CD4-positive, alpha-beta memory T cell (primary cell): ENCODE measurements at regions of chr12 and their contacts with region 1.

Region 1: GRCh38 chr12:118135788-118136558 is at the start of gene PEBP1:
- DNase-seq: peak; percentile 88 to 91 (median 90)
- H3K4me3 ChIP-seq: peak within 1 kb of the TSS; percentile 61 to 86
- H3K4me3 Mint-ChIP-seq: peak within 1 kb of the TSS; percentile 95 to 99 (median 96)
- H3K27ac ChIP-seq: peak within 1 kb of the TSS; percentile 67
- H3K27ac Mint-ChIP-seq: peak within 1 kb of the TSS; percentile 88 to 98 (median 94)
- H3K4me1 ChIP-seq: peaks cover 29% of the 10 kb centered on the region
- H3K4me1 Mint-ChIP-seq: peaks cover 19 to 54% (median 26%) of the 10 kb centered on the region in 4 donors
- H3K27me3 ChIP-seq: no peaks in the 10 kb centered on the region
- H3K27me3 Mint-ChIP-seq: no peaks in the 10 kb centered on the region
- total RNA-seq, gene PEBP1: 95.9 to 99.1 TPM

Region 2: GRCh38 chr12:118016424-118017264 is 119.3 kb before region 1 on chr12 and contains the start of gene RFC5:
- CTCF ChIA-PET with region 1: no interaction called
- POLR2A ChIA-PET with region 1: interaction called, 3 read pairs
- intact Hi-C with region 1: loop called (anchors 1 kb)
- DNase-seq: peak; percentile 95 to 96 (median 96)
- H3K4me3 ChIP-seq: peak within 1 kb of the TSS; percentile 9 to 92
- H3K4me3 Mint-ChIP-seq: peak within 1 kb of the TSS; percentile 90 to 97 (median 91)
- H3K27ac ChIP-seq: peak within 1 kb of the TSS; percentile 66
- H3K27ac Mint-ChIP-seq: peak within 1 kb of the TSS; percentile 87 to 98 (median 90)
- H3K4me1 ChIP-seq: peaks cover 15% of the 10 kb centered on the region
- H3K4me1 Mint-ChIP-seq: peaks cover 12 to 23% (median 17%) of the 10 kb centered on the region in 4 donors
- H3K27me3 ChIP-seq: no peaks in the 10 kb centered on the region
- H3K27me3 Mint-ChIP-seq: peaks cover 0 to 1% of the 10 kb centered on the region in 2 donors
- total RNA-seq, gene RFC5: 17.2 TPM

Region 3: GRCh38 chr12:118061011-118061875 is 74.7 kb before region 1 on chr12 and contains the start of gene WSB2:
- CTCF ChIA-PET with region 1: no interaction called
- POLR2A ChIA-PET with region 1: interaction called, 14 read pairs
- intact Hi-C with region 1: loop called (anchors 5 kb)
- DNase-seq: peak; percentile 34 to 57 (median 42)
- H3K4me3 ChIP-seq: peak within 1 kb of the TSS; percentile 84 to 96
- H3K4me3 Mint-ChIP-seq: peak within 1 kb of the TSS; percentile 92 to 98 (median 96)
- H3K27ac ChIP-seq: peak within 1 kb of the TSS; percentile 81
- H3K27ac Mint-ChIP-seq: peak within 1 kb of the TSS; percentile 92 to 97 (median 96)
- H3K4me1 ChIP-seq: peaks cover 53% of the 10 kb centered on the region
- H3K4me1 Mint-ChIP-seq: peaks cover 26 to 66% (median 46%) of the 10 kb centered on the region in 4 donors
- H3K27me3 ChIP-seq: no peaks in the 10 kb centered on the region
- H3K27me3 Mint-ChIP-seq: no peaks in the 10 kb centered on the region
- total RNA-seq, gene WSB2: 24.4 to 31.5 TPM

Region 4: DNA sequence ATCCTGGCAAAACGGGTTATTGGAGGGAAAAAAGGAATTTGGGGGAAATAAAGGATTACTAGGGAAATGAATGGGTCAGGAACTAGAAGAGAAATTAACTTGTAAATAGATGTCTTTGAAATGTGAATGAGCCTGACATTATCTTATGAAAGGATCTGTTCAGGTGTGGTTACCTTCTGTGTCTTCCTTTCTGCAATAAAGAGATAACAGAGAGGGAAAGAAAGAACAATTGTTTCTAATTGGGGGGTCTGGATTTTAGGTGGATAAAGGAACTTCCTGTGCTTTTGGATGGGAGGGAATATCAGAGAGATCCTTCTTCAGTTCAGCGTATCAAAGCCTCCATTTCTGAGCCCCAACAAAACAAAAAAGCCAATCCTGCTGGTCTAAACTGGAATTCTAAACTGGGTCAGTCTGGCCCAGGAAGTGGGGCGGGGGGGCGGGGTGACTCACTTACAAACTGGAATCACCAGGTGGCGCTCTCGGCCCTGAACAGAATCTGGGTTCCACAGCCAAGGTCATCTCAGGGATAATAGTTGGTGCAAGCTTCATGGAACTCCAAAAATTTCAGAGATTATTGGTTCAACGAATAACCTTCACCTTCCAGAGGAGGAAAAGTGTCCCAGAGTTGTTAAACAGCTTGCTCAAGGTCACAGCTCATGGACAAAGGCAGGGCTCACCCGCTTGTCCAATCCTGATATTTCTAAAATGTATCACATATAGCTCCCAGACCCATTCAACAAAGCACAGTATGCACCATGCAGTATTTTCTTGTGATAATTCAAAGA is 15.2 kb before region 1 on chr12:
- CTCF ChIA-PET with region 1: interaction called, 59 read pairs
- POLR2A ChIA-PET with region 1: interaction called, 14 read pairs
- intact Hi-C with region 1: loop called (anchors 1 kb)
- DNase-seq: peak; percentile 47 to 68 (median 59)
- H3K4me3 ChIP-seq: no peak overlapping the region
- H3K4me3 Mint-ChIP-seq: peak overlapping the region in 6 of 8 donors; percentile 5 to 70 (median 20)
- H3K27ac ChIP-seq: peak overlapping the region; percentile 47
- H3K27ac Mint-ChIP-seq: peak overlapping the region; percentile 76 to 96 (median 86)
- H3K4me1 ChIP-seq: peaks cover 10% of the 10 kb centered on the region
- H3K4me1 Mint-ChIP-seq: peaks cover 6 to 17% (median 11%) of the 10 kb centered on the region in 4 donors
- H3K27me3 ChIP-seq: no peaks in the 10 kb centered on the region
- H3K27me3 Mint-ChIP-seq: no peaks in the 10 kb centered on the region

Region 5: DNA sequence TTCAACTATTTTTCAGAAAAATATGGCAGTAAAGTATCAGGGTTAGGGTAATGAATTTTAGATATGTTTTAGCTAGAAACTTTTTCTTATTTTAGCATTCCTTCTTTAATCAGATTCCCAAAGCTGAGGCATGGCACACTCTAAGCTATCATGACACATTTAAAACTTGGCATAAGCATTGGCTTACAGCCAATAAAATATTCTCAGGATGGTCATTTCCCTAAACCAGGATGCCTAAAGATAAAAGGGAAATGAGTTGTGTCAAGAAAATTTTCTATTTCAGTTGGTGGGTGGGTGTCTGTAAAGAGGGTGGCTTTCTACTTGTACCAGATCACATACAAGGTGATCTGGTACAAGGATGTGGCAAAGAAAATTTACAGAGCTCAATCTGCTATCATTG is 47.7 kb after region 1 on chr12:
- CTCF ChIA-PET with region 1: interaction called, 34 read pairs
- POLR2A ChIA-PET with region 1: no interaction called
- intact Hi-C with region 1: loop called (anchors 5 kb)
- DNase-seq: no peak
- H3K4me3 ChIP-seq: no peak overlapping the region
- H3K4me3 Mint-ChIP-seq: no peak overlapping the region
- H3K27ac ChIP-seq: no peak overlapping the region
- H3K27ac Mint-ChIP-seq: no peak overlapping the region
- H3K4me1 ChIP-seq: peaks cover 4% of the 10 kb centered on the region
- H3K4me1 Mint-ChIP-seq: peaks cover 12 to 23% (median 14%) of the 10 kb centered on the region in 4 donors
- H3K27me3 ChIP-seq: no peaks in the 10 kb centered on the region
- H3K27me3 Mint-ChIP-seq: no peaks in the 10 kb centered on the region

Region 6: GRCh38 chr12:119667577-119668323 is 1531.8 kb after region 1 on chr12 and contains the start of gene PRKAB1:
- CTCF ChIA-PET with region 1: no interaction called
- POLR2A ChIA-PET with region 1: no interaction called
- intact Hi-C with region 1: loop called (anchors 2 kb)
- DNase-seq: peak; percentile 94 to 97 (median 96)
- H3K4me3 ChIP-seq: peak within 1 kb of the TSS; percentile 67 to 98
- H3K4me3 Mint-ChIP-seq: peak within 1 kb of the TSS; percentile 88 to 93 (median 90)
- H3K27ac ChIP-seq: peak within 1 kb of the TSS; percentile 78
- H3K27ac Mint-ChIP-seq: peak within 1 kb of the TSS; percentile 88 to 95 (median 93)
- H3K4me1 ChIP-seq: peaks cover 53% of the 10 kb centered on the region
- H3K4me1 Mint-ChIP-seq: peaks cover 30 to 67% (median 47%) of the 10 kb centered on the region in 4 donors
- H3K27me3 ChIP-seq: no peaks in the 10 kb centered on the region
- H3K27me3 Mint-ChIP-seq: no peaks in the 10 kb centered on the region
- total RNA-seq, gene PRKAB1: 43.4 to 47.6 TPM